ENCODE measurements at regions of chr21 and their contacts with region 1.

Region 1: DNA sequence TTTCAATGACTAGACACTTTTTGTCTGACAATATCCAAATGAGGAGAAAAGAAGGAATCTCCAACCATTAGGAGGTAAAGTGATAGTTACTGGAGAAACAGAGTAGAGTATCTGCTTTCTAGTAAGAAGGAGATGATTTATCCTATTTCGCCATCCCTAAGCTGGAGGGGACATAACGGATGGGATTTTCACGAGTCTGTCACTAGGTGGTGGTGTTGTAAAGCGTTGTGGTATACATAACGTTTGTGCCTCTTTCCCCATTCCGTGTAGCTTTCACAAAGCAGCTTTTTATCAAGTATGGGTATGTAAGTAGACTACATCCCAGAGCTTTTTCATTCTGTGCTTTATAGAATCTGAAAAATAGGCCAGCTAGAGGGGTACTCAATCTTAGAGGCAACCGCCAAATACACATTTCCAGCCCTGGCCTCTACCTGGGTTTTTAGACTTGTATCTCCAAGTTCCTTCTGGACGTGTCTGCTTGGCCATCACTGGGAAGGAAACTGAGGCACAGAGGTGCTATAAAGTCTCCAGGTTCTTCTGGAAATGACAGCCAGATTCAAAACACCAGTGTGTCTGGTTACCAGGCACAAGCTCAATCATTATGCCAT is 33.3 kb upstream of the FAM3B start:
- ATAC-seq: peak; percentile 91 to 99 (median 96)
- H3K4me3 ChIP-seq: no peak overlapping the region
- H3K27ac ChIP-seq: no peak overlapping the region
- H3K4me1 ChIP-seq: peaks cover 0 to 7% of the 10 kb centered on the region in 2 donors

Region 2: DNA sequence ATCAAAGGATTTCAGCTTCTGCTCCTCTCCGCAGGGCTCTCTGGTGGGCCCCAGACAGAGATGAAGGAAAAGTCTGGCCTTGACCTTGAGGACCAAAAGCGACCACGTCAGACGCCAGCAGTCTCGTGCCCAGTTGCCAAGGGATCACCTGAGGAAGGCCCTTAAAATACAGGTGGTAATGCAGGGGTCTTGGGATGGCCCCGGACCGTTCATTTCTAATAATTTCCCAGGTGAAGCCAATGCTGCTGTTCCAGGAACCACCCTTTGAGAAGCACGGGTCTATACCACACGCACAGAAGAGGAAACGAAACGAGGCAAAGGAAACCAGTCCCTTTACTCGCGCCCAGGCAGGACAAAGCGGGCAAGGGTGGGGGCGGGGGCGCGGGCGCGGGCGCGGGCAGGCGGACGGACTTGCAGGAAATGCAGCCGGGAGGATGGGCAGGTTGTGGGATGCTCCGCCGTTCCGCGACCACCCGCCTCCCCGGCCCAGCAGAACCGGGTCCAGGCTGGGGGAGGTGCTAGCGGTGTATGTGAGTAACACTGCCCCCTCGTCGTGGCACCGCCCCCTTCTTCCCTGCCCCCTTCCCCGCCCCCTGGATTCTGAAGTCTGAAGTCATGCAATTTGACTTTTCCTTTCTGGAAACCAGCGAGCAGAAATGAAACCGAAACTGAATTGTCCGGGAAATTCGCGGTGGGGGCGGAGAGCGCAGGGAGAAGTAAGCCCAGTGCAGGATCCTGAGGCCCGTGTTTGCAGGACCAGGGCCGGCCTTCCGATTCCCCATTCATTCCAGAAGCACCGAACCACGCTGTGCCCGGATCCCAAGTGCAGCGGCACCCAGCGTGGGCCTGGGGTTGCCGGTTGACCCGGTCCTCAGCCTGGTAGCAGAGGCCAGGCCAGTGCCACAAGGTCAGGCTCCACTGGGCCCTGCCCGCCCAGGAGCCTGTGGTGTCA is 136.9 kb after region 1 on chr21:
- in situ Hi-C with region 1: loop called in 1 of 9 experiments (anchors 25 kb)
- ATAC-seq: peak; percentile 85 to 93 (median 88)
- H3K4me3 ChIP-seq: peak overlapping the region; percentile 12 to 43 (median 36)
- H3K27ac ChIP-seq: peak overlapping the region in 1 of 2 donors; percentile 80
- H3K4me1 ChIP-seq: peaks cover 15 to 18% of the 10 kb centered on the region in 2 donors

Region 3: DNA sequence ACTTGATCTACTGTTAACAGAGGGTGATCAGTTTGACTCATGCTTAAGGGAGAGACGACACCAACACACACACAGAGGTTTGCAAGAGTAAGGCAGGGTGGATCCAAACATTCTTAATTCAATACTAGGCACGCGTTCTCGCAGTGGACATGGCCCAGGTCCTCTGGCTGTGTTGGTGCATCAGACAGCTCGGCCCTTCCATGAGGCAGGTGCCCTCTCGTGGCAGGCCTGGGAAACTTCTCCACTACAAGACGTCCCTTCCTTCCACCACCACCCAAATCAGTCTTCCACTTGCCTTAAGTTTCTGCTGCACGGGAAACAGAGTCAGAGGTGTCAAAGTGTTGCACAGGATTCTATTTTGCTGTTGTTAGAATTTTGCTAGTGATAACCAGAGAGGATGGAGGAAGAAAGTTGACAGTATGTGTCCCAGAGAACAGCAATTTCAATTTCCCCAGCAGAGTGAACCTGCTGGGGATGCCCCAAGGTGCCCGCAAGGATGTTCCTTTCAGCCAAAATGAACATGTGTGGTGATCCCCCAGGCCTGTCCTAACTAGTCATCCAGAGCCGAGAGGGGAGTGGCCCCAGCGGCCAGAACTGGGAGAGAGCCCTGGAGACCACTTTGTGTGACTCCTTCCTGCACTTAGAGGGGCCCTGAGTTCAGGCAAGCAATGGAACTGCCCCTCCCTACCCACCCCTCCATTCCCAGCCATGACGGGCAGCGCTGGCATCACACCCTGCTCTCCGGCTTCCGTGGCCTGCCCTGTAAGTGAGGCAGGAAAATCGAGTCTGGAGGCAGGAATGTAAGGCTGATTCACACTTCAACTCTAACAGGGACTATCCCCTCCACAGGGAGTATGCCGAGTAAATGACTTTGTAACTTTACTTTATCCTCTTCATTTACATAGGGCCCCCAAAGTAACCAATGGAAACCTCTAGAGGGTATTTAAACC is 177.5 kb after region 1 on chr21:
- in situ Hi-C with region 1: loop called in 1 of 9 experiments (anchors 25 kb)
- ATAC-seq: peak; percentile 84 to 100 (median 90)
- H3K4me3 ChIP-seq: no peak overlapping the region
- H3K27ac ChIP-seq: no peak overlapping the region
- H3K4me1 ChIP-seq: no peaks in the 10 kb centered on the region

Region 4: GRCh38 chr21:41777951-41778874 is 494.9 kb after region 1 on chr21:
- in situ Hi-C with region 1: loop called in 1 of 9 experiments (anchors 25 kb)
- ATAC-seq: peak; percentile 73 to 98 (median 94)
- H3K4me3 ChIP-seq: no peak overlapping the region
- H3K27ac ChIP-seq: no peak overlapping the region
- H3K4me1 ChIP-seq: no peaks in the 10 kb centered on the region

Measured in motor neuron (in vitro differentiated cells).